Heart left ventricle (tissue), 16 donors: ENCODE measurements at regions of chr17 and their contacts with region 1.

Region 1: GRCh38 chr17:75896415-75897159 is at the start of gene TRIM65:
- DNase-seq: peak; percentile 88 to 94 (median 90)
- ATAC-seq: peak; percentile 61 to 87 (median 85)
- H3K4me3 ChIP-seq: peak within 1 kb of the TSS; percentile 48 to 97 (median 80)
- H3K27ac ChIP-seq: peak within 1 kb of the TSS; percentile 88 to 99 (median 94)
- H3K4me1 ChIP-seq: peaks cover 0 to 32% (median 24%) of the 10 kb centered on the region in 12 donors
- H3K27me3 ChIP-seq: no peaks in the 10 kb centered on the region
- CTCF ChIP-seq: peak in 11 of 12 donors; percentile 28 to 73 (median 55)
- POLR2A ChIP-seq: peak in 1 of 2 donors; percentile 84
- total RNA-seq, gene TRIM65: 6.8 to 16.1 (median 9.5) TPM

Region 2: DNA sequence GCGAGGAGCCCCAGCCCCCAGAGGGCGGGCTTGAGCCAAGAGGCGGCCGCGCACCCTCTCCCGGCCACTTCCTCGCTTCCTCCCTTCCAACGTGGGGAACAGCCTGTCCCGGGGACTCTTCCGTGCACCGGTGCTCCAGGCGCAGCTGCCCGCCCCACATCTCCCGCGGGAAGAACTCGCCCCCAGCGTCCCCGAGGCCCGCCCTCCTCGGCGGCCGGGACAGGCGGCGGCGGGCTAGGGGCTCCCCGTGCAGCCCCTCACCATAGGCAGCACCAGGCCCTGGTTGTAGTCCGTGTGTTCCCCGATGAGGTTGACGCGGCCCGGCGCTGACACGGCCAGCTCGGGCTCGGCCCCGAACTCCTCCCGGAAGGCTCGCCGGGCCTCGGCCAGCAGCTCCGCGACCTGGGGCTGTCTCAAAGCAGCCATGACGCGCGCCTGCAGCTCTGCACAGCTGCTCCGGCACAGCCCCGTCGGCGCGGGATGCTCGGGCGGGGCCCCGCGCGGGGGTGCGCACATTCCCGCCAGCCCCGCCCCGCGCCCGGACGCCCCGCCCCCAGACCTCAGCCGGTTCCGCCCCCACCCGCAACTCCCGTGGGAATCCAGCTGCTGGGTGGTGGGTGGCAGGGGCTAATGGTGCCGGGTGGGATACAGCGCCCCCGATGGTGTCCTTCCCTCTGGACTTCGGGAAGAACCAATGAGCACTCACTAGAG is 131.7 kb before region 1 on chr17 and contains the start of gene GALK1:
- intact Hi-C with region 1: loop called in 2 of 10 experiments (anchors 10 kb)
- DNase-seq: peak; percentile 79 to 88 (median 82)
- ATAC-seq: peak; percentile 56 to 92 (median 86)
- H3K4me3 ChIP-seq: peak within 1 kb of the TSS; percentile 54 to 91 (median 74)
- H3K27ac ChIP-seq: peak within 1 kb of the TSS; percentile 58 to 98 (median 87)
- H3K4me1 ChIP-seq: peaks cover 0 to 22% (median 14%) of the 10 kb centered on the region in 12 donors
- H3K27me3 ChIP-seq: no peaks in the 10 kb centered on the region
- CTCF ChIP-seq: peak; percentile 25 to 84 (median 54)
- POLR2A ChIP-seq: peak in 1 of 2 donors; percentile 64
- total RNA-seq, gene GALK1: 9.6 to 30.6 (median 16.5) TPM

Region 3: GRCh38 chr17:75779231-75779986 is 117.2 kb before region 1 on chr17:
- intact Hi-C with region 1: loop called in 4 of 10 experiments (anchors 5 to 10 kb)
- DNase-seq: peak; percentile 97 to 99 (median 98)
- ATAC-seq: peak; percentile 79 to 85 (median 82)
- H3K4me3 ChIP-seq: peak overlapping the region; percentile 67 to 97 (median 88)
- H3K27ac ChIP-seq: peak overlapping the region; percentile 81 to 100 (median 98)
- H3K4me1 ChIP-seq: peaks cover 14 to 59% (median 43%) of the 10 kb centered on the region in 12 donors
- H3K27me3 ChIP-seq: no peaks in the 10 kb centered on the region
- CTCF ChIP-seq: peak in 3 of 12 donors; percentile 11 to 26 (median 16)
- POLR2A ChIP-seq: peak; percentile 100

Region 4: GRCh38 chr17:75784473-75785015 is 112.0 kb before region 1 on chr17 and contains the start of gene UNK:
- intact Hi-C with region 1: loop called in 4 of 10 experiments (anchors 5 to 10 kb)
- DNase-seq: peak; percentile 97 to 99 (median 98)
- ATAC-seq: peak; percentile 91 to 94 (median 93)
- H3K4me3 ChIP-seq: peak within 1 kb of the TSS; percentile 45 to 89 (median 75)
- H3K27ac ChIP-seq: peak within 1 kb of the TSS; percentile 94 to 100 (median 99)
- H3K4me1 ChIP-seq: peaks cover 4 to 56% (median 36%) of the 10 kb centered on the region in 12 donors
- H3K27me3 ChIP-seq: no peaks in the 10 kb centered on the region
- CTCF ChIP-seq: no peak
- POLR2A ChIP-seq: peak in 1 of 2 donors; percentile 59
- total RNA-seq, gene UNK: 11.3 to 27.5 (median 16.3) TPM

Region 5: GRCh38 chr17:75845049-75845860 is 51.3 kb before region 1 on chr17:
- intact Hi-C with region 1: loop called in 1 of 10 experiments (anchors 10 kb)
- DNase-seq: peak; percentile 86 to 92 (median 90)
- ATAC-seq: peak; percentile 80 to 81 (median 80)
- H3K4me3 ChIP-seq: peak overlapping the region in 3 of 12 donors; percentile 6 to 69 (median 12)
- H3K27ac ChIP-seq: peak overlapping the region; percentile 56 to 99 (median 84)
- H3K4me1 ChIP-seq: peaks cover 36 to 73% (median 58%) of the 10 kb centered on the region in 12 donors
- H3K27me3 ChIP-seq: no peaks in the 10 kb centered on the region
- CTCF ChIP-seq: peak; percentile 64 to 88 (median 80)
- POLR2A ChIP-seq: peak in 1 of 2 donors; percentile 46

Region 6: DNA sequence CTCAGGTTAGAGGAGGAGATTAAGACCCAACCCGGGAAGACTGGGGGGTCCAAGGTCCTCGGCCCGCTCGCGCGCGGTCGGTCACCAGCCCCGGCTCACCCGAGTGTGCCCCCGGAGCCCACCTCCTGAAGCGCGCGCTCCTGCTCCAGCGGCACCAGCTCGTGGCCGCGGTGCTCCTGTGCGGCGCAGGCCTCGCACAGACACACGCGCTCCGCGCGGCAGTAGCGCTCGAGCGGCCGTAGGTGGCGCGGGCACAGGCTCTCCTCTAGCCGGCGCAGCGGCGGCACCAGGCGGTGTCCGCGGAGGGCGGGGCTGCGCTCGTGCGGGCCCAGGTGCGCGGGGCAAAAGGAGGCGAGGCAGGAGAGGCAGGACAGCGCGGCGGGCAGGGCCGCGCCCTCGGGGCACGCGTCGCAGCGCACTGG is 18.8 kb before region 1 on chr17:
- intact Hi-C with region 1: loop called in 2 of 10 experiments (anchors 2 kb)
- DNase-seq: peak; percentile 67 to 89 (median 76)
- ATAC-seq: peak in 3 of 4 donors; percentile 35 to 67 (median 61)
- H3K4me3 ChIP-seq: peak overlapping the region; percentile 64 to 96 (median 78)
- H3K27ac ChIP-seq: peak overlapping the region; percentile 91 to 99 (median 96)
- H3K4me1 ChIP-seq: peaks cover 14 to 64% (median 42%) of the 10 kb centered on the region in 12 donors
- H3K27me3 ChIP-seq: no peaks in the 10 kb centered on the region
- CTCF ChIP-seq: peak in 9 of 12 donors; percentile 8 to 67 (median 48)
- POLR2A ChIP-seq: no peak